ENCODE measurements at regions of chr1 and their contacts with region 1.

Region 1: GRCh38 chr1:85612704-85613361 is 32.3 kb downstream of the CCN1 start:
- DNase-seq: peak; percentile 94
- ATAC-seq: peak; percentile 58
- H3K4me3 ChIP-seq: no peak overlapping the region
- H3K27ac ChIP-seq: peak overlapping the region; percentile 89
- H3K4me1 ChIP-seq: peaks cover 30% of the 10 kb centered on the region
- H3K27me3 ChIP-seq: no peaks in the 10 kb centered on the region
- CTCF ChIP-seq: peak; percentile 76
- POLR2A ChIP-seq: no peak; the same call in 1 of the 2 replicates
- RAD21 ChIP-seq: peak; percentile 78

Region 2: GRCh38 chr1:85276215-85276977 is 336.4 kb before region 1 on chr1 and contains the start of gene BCL10:
- CTCF ChIA-PET with region 1: no interaction called
- POLR2A ChIA-PET with region 1: no interaction called
- dilution Hi-C with region 1: no loop called
- in situ Hi-C with region 1: no loop called
- intact Hi-C with region 1: no loop called
- DNase-seq: peak; percentile 97
- ATAC-seq: peak; percentile 96
- H3K4me3 ChIP-seq: peak within 1 kb of the TSS; percentile 97
- H3K27ac ChIP-seq: peak within 1 kb of the TSS; percentile 98
- H3K4me1 ChIP-seq: peaks cover 6% of the 10 kb centered on the region
- H3K27me3 ChIP-seq: no peaks in the 10 kb centered on the region
- CTCF ChIP-seq: no peak
- POLR2A ChIP-seq: peak; percentile 90
- RAD21 ChIP-seq: no peak
- total RNA-seq, gene BCL10: 30.5 and 51.4 TPM in 2 replicates

Region 3: GRCh38 chr1:85313888-85314696 is 298.7 kb before region 1 on chr1:
- CTCF ChIA-PET with region 1: no interaction called
- POLR2A ChIA-PET with region 1: no interaction called
- dilution Hi-C with region 1: no loop called
- in situ Hi-C with region 1: no loop called
- intact Hi-C with region 1: loop called (anchors 1 kb)
- DNase-seq: peak; percentile 96
- ATAC-seq: peak; percentile 78
- H3K4me3 ChIP-seq: no peak overlapping the region
- H3K27ac ChIP-seq: peak overlapping the region; percentile 87
- H3K4me1 ChIP-seq: peaks cover 18% of the 10 kb centered on the region
- H3K27me3 ChIP-seq: no peaks in the 10 kb centered on the region
- CTCF ChIP-seq: no peak
- POLR2A ChIP-seq: no peak
- RAD21 ChIP-seq: no peak

Region 4: GRCh38 chr1:85356130-85356529 is 256.7 kb before region 1 on chr1:
- CTCF ChIA-PET with region 1: no interaction called
- POLR2A ChIA-PET with region 1: no interaction called
- dilution Hi-C with region 1: no loop called
- in situ Hi-C with region 1: no loop called
- intact Hi-C with region 1: no loop called
- DNase-seq: no peak
- ATAC-seq: no peak
- H3K4me3 ChIP-seq: no peak overlapping the region
- H3K27ac ChIP-seq: no peak overlapping the region
- H3K4me1 ChIP-seq: peaks cover 11% of the 10 kb centered on the region
- H3K27me3 ChIP-seq: no peaks in the 10 kb centered on the region
- CTCF ChIP-seq: no peak
- POLR2A ChIP-seq: no peak
- RAD21 ChIP-seq: no peak

Region 5: GRCh38 chr1:85406887-85407533 is 205.8 kb before region 1 on chr1:
- CTCF ChIA-PET with region 1: no interaction called
- POLR2A ChIA-PET with region 1: no interaction called
- dilution Hi-C with region 1: no loop called
- in situ Hi-C with region 1: no loop called
- intact Hi-C with region 1: no loop called
- DNase-seq: peak; percentile 94
- ATAC-seq: peak; percentile 93
- H3K4me3 ChIP-seq: no peak overlapping the region; the same call in 1 of the 2 replicates
- H3K27ac ChIP-seq: no peak overlapping the region
- H3K4me1 ChIP-seq: peaks cover 10% of the 10 kb centered on the region
- H3K27me3 ChIP-seq: no peaks in the 10 kb centered on the region
- CTCF ChIP-seq: no peak
- POLR2A ChIP-seq: no peak
- RAD21 ChIP-seq: 0 out of 2 replicates have a peak, but pooled peaks have one; percentile 10

Region 6: GRCh38 chr1:85584264-85584781 is 28.5 kb before region 1 on chr1:
- CTCF ChIA-PET with region 1: interaction called, 8 read pairs
- POLR2A ChIA-PET with region 1: interaction called, 39 read pairs
- dilution Hi-C with region 1: no loop called
- in situ Hi-C with region 1: no loop called
- intact Hi-C with region 1: loop called (anchors 1 kb)
- DNase-seq: peak; percentile 95
- ATAC-seq: peak; percentile 19
- H3K4me3 ChIP-seq: no peak overlapping the region
- H3K27ac ChIP-seq: no peak overlapping the region
- H3K4me1 ChIP-seq: peaks cover 2% of the 10 kb centered on the region
- H3K27me3 ChIP-seq: no peaks in the 10 kb centered on the region
- CTCF ChIP-seq: no peak
- POLR2A ChIP-seq: peak; percentile 98
- RAD21 ChIP-seq: no peak; the same call in 1 of the 2 replicates

Region 7: GRCh38 chr1:85628791-85629531 is 16.1 kb after region 1 on chr1:
- CTCF ChIA-PET with region 1: interaction called, 12 read pairs
- POLR2A ChIA-PET with region 1: interaction called, 18 read pairs
- dilution Hi-C with region 1: no loop called
- in situ Hi-C with region 1: no loop called
- intact Hi-C with region 1: loop called (anchors 2 kb)
- DNase-seq: peak; percentile 95
- ATAC-seq: peak; percentile 89
- H3K4me3 ChIP-seq: 0 out of 2 replicates have a peak overlapping the region, but pooled peaks have one; percentile 0
- H3K27ac ChIP-seq: peak overlapping the region; percentile 96
- H3K4me1 ChIP-seq: peaks cover 13% of the 10 kb centered on the region
- H3K27me3 ChIP-seq: no peaks in the 10 kb centered on the region
- CTCF ChIP-seq: no peak
- POLR2A ChIP-seq: peak; percentile 34; the same call in 1 of the 2 replicates
- RAD21 ChIP-seq: no peak

Region 8: DNA sequence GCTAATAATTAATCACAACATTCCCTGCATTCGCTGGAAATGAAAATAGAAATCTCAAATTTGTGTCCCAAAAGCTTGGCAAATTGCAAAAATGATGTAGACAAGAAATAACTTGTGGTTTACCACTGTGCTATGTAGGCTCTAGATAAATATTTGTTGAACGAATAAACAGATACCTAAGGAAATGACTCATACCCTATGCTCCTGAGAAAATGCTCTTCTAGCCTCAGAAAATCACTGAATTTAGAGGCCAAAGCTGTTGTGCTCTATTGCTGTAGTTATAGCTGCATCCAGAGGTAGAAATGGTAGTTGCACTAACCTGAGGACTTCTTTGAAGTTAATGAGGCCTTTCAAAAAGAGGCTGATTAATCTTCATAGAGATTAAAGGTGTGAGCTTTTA is 237.4 kb after region 1 on chr1:
- CTCF ChIA-PET with region 1: no interaction called
- POLR2A ChIA-PET with region 1: interaction called, 7 read pairs
- dilution Hi-C with region 1: no loop called
- in situ Hi-C with region 1: no loop called
- intact Hi-C with region 1: loop called (anchors 1 kb)
- DNase-seq: peak; percentile 95
- ATAC-seq: peak; percentile 97
- H3K4me3 ChIP-seq: no peak overlapping the region
- H3K27ac ChIP-seq: no peak overlapping the region; the same call in 1 of the 2 replicates
- H3K4me1 ChIP-seq: peaks cover 4% of the 10 kb centered on the region; the same call in 1 of the 2 replicates
- H3K27me3 ChIP-seq: no peaks in the 10 kb centered on the region
- CTCF ChIP-seq: peak; percentile 54
- POLR2A ChIP-seq: no peak
- RAD21 ChIP-seq: peak; percentile 69